K562 (cell line): ENCODE measurements at regions of chr2 and their contacts with region 1.

Region 1: DNA sequence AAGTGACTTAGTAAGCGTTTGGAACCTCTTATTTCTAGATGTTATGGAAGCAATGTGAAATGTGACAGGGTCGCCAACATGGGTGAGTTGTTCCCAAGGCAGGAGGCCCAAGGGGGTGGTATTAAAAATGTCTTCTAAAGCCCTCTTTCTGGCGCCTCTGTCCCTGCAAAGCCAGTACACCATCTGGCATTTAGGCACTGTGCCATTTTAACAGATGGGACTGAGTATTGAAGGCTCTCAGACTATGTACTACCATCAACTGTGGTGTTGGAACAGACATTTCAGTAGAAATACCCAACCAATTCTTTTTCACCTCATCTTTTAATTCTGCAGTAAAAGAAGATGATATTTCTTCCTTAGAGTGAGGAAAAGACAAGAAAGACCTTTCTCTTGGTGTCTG is 384.5 kb upstream of the MMADHC start:
- DNase-seq: no peak
- ATAC-seq: no peak
- H3K4me3 ChIP-seq: no peak overlapping the region
- H3K27ac ChIP-seq: no peak overlapping the region
- H3K4me1 ChIP-seq: no peaks in the 10 kb centered on the region
- H3K27me3 ChIP-seq: no peaks in the 10 kb centered on the region
- CTCF ChIP-seq: no peak
- EP300 ChIP-seq: no peak
- POLR2A ChIP-seq: no peak
- RAD21 ChIP-seq: no peak

Region 2: GRCh38 chr2:149928011-149928410 is 44.1 kb before region 1 on chr2:
- CTCF ChIA-PET with region 1: no interaction called
- POLR2A ChIA-PET with region 1: no interaction called
- in situ Hi-C with region 1: no loop called
- intact Hi-C with region 1: loop called (anchors 2 kb)
- DNase-seq: no peak
- ATAC-seq: no peak
- H3K4me3 ChIP-seq: no peak overlapping the region
- H3K27ac ChIP-seq: no peak overlapping the region
- H3K4me1 ChIP-seq: no peaks in the 10 kb centered on the region
- H3K27me3 ChIP-seq: no peaks in the 10 kb centered on the region
- CTCF ChIP-seq: no peak
- EP300 ChIP-seq: no peak
- POLR2A ChIP-seq: no peak
- RAD21 ChIP-seq: no peak

Region 3: GRCh38 chr2:149986861-149987260 is 14.8 kb after region 1 on chr2:
- CTCF ChIA-PET with region 1: no interaction called
- POLR2A ChIA-PET with region 1: no interaction called
- in situ Hi-C with region 1: no loop called
- intact Hi-C with region 1: no loop called
- DNase-seq: no peak
- ATAC-seq: no peak
- H3K4me3 ChIP-seq: no peak overlapping the region
- H3K27ac ChIP-seq: no peak overlapping the region
- H3K4me1 ChIP-seq: no peaks in the 10 kb centered on the region
- H3K27me3 ChIP-seq: no peaks in the 10 kb centered on the region
- CTCF ChIP-seq: no peak
- EP300 ChIP-seq: no peak
- POLR2A ChIP-seq: no peak
- RAD21 ChIP-seq: no peak